Caco-2 (cell line): ENCODE measurements at regions of chr19 and their contacts with region 1.

Region 1: GRCh38 chr19:7149956-7150705 is 80.6 kb downstream of the ZNF557 start:
- DNase-seq: no peak
- H3K4me3 ChIP-seq: no peak overlapping the region
- H3K4me3 Mint-ChIP-seq: no peak overlapping the region
- H3K27ac Mint-ChIP-seq: no peak overlapping the region
- H3K4me1 ChIP-seq: no peaks in the 10 kb centered on the region
- H3K4me1 Mint-ChIP-seq: peaks cover 7% of the 10 kb centered on the region
- H3K27me3 ChIP-seq: no peaks in the 10 kb centered on the region
- H3K27me3 Mint-ChIP-seq: no peaks in the 10 kb centered on the region
- CTCF ChIP-seq: no peak

Region 2: GRCh38 chr19:7293795-7294570 is 143.9 kb after region 1 on chr19 and contains the start of gene INSR:
- CTCF ChIA-PET with region 1: no interaction called
- POLR2A ChIA-PET with region 1: no interaction called
- intact Hi-C with region 1: loop called (anchors 1 kb)
- DNase-seq: peak; percentile 89 to 94
- H3K4me3 ChIP-seq: peak within 1 kb of the TSS; percentile 73
- H3K4me3 Mint-ChIP-seq: peak within 1 kb of the TSS; percentile 89
- H3K27ac Mint-ChIP-seq: peak within 1 kb of the TSS; percentile 87
- H3K4me1 ChIP-seq: peaks cover 9% of the 10 kb centered on the region; the same call in 1 of the 2 replicates
- H3K4me1 Mint-ChIP-seq: peaks cover 3% of the 10 kb centered on the region
- H3K27me3 ChIP-seq: no peaks in the 10 kb centered on the region
- H3K27me3 Mint-ChIP-seq: no peaks in the 10 kb centered on the region
- CTCF ChIP-seq: no peak
- total RNA-seq, gene INSR: 22.6 and 23.3 TPM in 2 replicates

Region 3: DNA sequence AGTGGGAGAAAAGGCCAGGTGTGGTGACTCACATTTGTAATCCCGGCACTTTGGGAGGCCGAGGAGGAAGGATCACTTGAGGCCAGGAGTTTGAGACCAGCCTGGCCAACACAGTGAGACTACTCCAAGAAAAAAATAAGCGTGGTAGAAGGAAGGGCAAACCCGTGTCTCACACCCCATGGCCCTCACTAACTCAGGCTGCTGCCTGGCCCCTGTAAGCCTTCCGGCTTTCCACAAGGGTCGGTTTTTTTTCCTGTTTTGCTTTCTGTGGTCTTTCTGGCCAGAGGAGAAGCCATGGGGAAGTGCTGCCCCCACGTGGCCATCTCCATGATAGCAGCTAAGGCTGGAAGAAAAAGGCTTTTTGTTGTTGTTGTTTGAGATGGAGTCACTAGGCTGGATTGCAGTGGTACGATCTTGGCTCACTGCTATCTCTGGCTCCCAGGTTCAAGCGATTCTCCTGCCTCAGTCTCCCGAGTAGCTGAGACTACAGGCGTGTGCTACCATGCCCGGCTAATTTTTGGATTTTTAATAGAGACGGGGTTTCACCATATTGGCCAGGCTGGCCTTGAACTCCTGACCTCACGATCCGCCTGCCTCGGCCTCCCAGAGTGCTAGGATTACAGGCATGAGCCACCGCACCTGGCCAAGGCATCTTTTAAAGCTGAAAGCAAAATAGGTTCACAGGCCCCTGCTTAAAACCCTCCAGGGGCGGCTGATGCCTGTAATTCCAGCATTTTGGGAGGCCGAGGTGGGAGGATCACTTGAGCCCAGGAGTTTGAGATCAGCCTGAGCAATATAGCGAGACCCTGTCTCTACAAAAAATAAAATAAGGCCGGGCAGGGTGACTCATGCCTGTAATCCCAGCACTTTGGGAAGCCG is 191.1 kb after region 1 on chr19:
- CTCF ChIA-PET with region 1: interaction called, 5 read pairs
- POLR2A ChIA-PET with region 1: no interaction called
- intact Hi-C with region 1: loop called (anchors 1 kb)
- DNase-seq: peak; percentile 77 to 88
- H3K4me3 ChIP-seq: no peak overlapping the region
- H3K4me3 Mint-ChIP-seq: no peak overlapping the region
- H3K27ac Mint-ChIP-seq: no peak overlapping the region
- H3K4me1 ChIP-seq: no peaks in the 10 kb centered on the region; the same call in 1 of the 2 replicates
- H3K4me1 Mint-ChIP-seq: no peaks in the 10 kb centered on the region
- H3K27me3 ChIP-seq: no peaks in the 10 kb centered on the region
- H3K27me3 Mint-ChIP-seq: no peaks in the 10 kb centered on the region
- CTCF ChIP-seq: peak; percentile 87 to 94